Activated T-helper 2 cell treated with anti-CD3 and anti-CD28 coated beads, Interferon-gamma antibody, Interleukin-2, Interleukin-4, amounts not matched to agents 10 μg/mL and 5 μg/mL and 100 μg/mL, durations not matched to agents 14 hours and 24 hours and 36 hours (primary cell): ENCODE measurements at regions of chr10 and their contacts with region 1.

Region 1: GRCh38 chr10:67612577-67613537 is 83.1 kb downstream of the CTNNA3 start:
- DNase-seq: peak; percentile 77
- H3K4me3 Mint-ChIP-seq: peak overlapping the region; percentile 38
- H3K27ac Mint-ChIP-seq: peak overlapping the region; percentile 56
- H3K4me1 Mint-ChIP-seq: peaks cover 27% of the 10 kb centered on the region
- H3K27me3 Mint-ChIP-seq: peaks cover 40% of the 10 kb centered on the region

Region 2: GRCh38 chr10:67015225-67015624 is 597.6 kb before region 1 on chr10:
- intact Hi-C with region 1: loop called (anchors 5 kb)
- DNase-seq: no peak
- H3K4me3 Mint-ChIP-seq: no peak overlapping the region
- H3K27ac Mint-ChIP-seq: peak overlapping the region; percentile 46
- H3K4me1 Mint-ChIP-seq: peaks cover 27% of the 10 kb centered on the region
- H3K27me3 Mint-ChIP-seq: no peaks in the 10 kb centered on the region

Region 3: DNA sequence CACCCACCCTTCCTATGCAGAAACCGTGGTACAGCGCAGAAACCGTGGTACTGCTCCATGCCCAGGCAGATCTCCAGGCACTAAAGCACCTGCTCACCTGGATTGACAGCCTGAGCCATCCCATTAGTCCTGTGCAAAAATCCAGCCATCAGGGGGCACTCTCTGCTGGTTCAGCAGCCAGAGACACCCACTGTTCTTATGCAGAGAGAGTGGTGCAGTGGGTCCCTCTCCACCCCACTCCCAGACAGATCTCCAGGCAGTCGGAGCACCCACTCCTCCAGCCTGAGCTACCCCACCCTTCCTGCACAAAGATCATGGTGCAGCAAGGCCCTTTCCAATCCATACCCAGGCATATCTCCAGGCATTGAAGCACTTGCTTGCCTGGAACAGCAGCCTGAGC is 136.7 kb before region 1 on chr10:
- intact Hi-C with region 1: no loop called
- DNase-seq: no peak
- H3K4me3 Mint-ChIP-seq: no peak overlapping the region
- H3K27ac Mint-ChIP-seq: no peak overlapping the region
- H3K4me1 Mint-ChIP-seq: no peaks in the 10 kb centered on the region
- H3K27me3 Mint-ChIP-seq: no peaks in the 10 kb centered on the region

Region 4: GRCh38 chr10:67550838-67551402 is 61.9 kb before region 1 on chr10:
- intact Hi-C with region 1: no loop called
- DNase-seq: no peak
- H3K4me3 Mint-ChIP-seq: no peak overlapping the region
- H3K27ac Mint-ChIP-seq: no peak overlapping the region
- H3K4me1 Mint-ChIP-seq: no peaks in the 10 kb centered on the region
- H3K27me3 Mint-ChIP-seq: peaks cover 5% of the 10 kb centered on the region

Region 5: DNA sequence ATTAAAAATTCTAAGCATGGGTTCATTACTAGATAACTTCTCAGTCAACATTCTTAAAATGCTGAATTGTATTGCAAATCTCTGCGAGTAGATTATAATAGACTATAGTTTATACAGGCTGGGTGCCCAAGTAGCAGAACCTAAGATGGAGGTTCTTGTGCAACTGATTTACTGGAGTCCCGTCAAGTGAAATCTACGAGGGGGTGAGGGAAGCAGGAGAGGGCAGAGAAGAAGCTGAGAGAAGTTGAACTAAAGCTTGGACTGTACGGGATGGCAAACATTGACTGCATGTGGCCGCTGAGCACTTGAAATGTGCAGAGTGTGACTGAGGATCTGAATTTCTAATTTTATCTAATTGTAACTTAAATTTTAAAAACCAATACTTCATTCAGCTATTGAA is 41.4 kb before region 1 on chr10:
- intact Hi-C with region 1: no loop called
- DNase-seq: no peak
- H3K4me3 Mint-ChIP-seq: no peak overlapping the region
- H3K27ac Mint-ChIP-seq: no peak overlapping the region
- H3K4me1 Mint-ChIP-seq: no peaks in the 10 kb centered on the region
- H3K27me3 Mint-ChIP-seq: peaks cover 1% of the 10 kb centered on the region

Region 6: DNA sequence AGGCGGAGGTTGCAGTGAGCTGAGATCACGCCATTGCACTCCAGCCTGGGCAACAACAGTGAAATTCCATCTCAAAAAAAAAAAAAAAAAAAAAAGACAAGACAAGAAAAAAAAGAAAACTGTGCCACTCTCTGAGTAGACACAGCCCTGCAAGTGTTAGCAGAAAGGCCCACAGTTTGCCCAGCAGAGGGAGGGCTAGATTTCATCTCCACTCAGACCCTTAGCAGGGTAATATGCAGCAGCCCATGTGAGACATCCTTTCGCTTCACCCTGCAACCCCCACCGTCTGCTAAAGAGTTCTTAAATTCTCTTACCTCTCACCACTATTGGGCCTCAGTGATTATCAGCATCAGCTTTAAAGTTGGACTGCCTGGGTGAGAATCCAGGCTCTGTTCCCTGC is 44.9 kb after region 1 on chr10:
- intact Hi-C with region 1: loop called (anchors 2 kb)
- DNase-seq: no peak
- H3K4me3 Mint-ChIP-seq: no peak overlapping the region
- H3K27ac Mint-ChIP-seq: no peak overlapping the region
- H3K4me1 Mint-ChIP-seq: no peaks in the 10 kb centered on the region
- H3K27me3 Mint-ChIP-seq: peaks cover 19% of the 10 kb centered on the region

Region 7: DNA sequence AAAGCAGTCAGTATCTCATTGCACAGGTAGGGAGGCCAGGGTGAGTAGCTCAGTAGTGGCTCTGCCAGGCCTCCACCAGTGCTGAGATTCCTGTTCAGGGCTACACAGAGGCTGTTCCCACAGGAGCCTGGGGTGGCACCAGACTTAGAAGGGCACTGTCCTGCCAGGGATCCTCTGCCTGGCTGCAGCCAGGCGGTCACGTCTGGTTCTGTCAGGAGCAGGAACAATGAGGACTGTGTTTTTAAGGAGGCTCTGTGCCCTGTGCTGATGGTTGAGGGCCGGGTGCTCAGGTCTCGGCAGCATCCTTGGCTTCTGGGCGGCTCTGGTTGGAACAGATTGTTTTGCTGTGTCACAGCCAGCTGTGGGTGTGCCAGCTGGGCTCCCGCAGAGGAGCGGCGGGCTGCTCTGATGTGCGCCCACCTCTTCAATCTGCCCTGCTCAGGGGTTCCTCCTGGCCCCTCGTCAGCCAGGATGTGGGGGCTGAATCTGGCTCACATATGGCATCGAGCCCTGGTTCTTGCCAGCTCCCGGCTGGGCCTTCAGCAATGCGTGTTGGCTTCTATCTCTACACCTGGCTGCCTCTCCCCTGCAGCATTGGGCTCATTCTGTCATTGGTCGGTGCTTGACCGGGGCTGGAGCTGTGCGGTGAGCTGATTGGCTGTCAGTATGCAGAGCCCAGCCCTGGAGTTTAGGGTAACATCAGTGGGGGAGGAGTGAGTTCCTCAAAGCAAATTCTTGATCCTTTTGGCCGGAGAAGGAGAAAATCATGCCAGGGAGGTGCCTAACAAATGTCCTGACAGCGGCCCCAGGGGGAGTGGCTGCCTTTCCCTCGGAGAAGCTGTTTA is 1762.7 kb after region 1 on chr10:
- intact Hi-C with region 1: no loop called
- DNase-seq: no peak
- H3K4me3 Mint-ChIP-seq: no peak overlapping the region
- H3K27ac Mint-ChIP-seq: no peak overlapping the region
- H3K4me1 Mint-ChIP-seq: peaks cover 1% of the 10 kb centered on the region
- H3K27me3 Mint-ChIP-seq: no peaks in the 10 kb centered on the region